CD8-positive, alpha-beta memory T cell (primary cell): ENCODE measurements at regions of chr7 and their contacts with region 1.

Region 1: GRCh38 chr7:155205368-155206317 is 92.0 kb upstream of the INSIG1 start:
- DNase-seq: peak; percentile 70 to 95 (median 81)
- H3K4me3 ChIP-seq: peak overlapping the region; percentile 70
- H3K4me3 Mint-ChIP-seq: peak overlapping the region; percentile 84 to 89 (median 87)
- H3K27ac ChIP-seq: peak overlapping the region; percentile 91
- H3K27ac Mint-ChIP-seq: peak overlapping the region; percentile 93 to 99 (median 96)
- H3K4me1 ChIP-seq: peaks cover 22% of the 10 kb centered on the region
- H3K4me1 Mint-ChIP-seq: peaks cover 16 to 22% (median 21%) of the 10 kb centered on the region in 3 donors
- H3K27me3 ChIP-seq: no peaks in the 10 kb centered on the region
- H3K27me3 Mint-ChIP-seq: no peaks in the 10 kb centered on the region

Region 2: GRCh38 chr7:155190688-155191087 is 15.0 kb before region 1 on chr7:
- CTCF ChIA-PET with region 1: interaction called, 22 read pairs
- POLR2A ChIA-PET with region 1: no interaction called
- DNase-seq: peak; percentile 31 to 58 (median 50)
- H3K4me3 ChIP-seq: no peak overlapping the region
- H3K4me3 Mint-ChIP-seq: peak overlapping the region in 1 of 7 donors; percentile 34
- H3K27ac ChIP-seq: no peak overlapping the region
- H3K27ac Mint-ChIP-seq: no peak overlapping the region
- H3K4me1 ChIP-seq: no peaks in the 10 kb centered on the region
- H3K4me1 Mint-ChIP-seq: peaks cover 4 to 6% (median 4%) of the 10 kb centered on the region in 3 donors
- H3K27me3 ChIP-seq: no peaks in the 10 kb centered on the region
- H3K27me3 Mint-ChIP-seq: peaks cover 9 to 19% of the 10 kb centered on the region in 2 donors

Region 3: DNA sequence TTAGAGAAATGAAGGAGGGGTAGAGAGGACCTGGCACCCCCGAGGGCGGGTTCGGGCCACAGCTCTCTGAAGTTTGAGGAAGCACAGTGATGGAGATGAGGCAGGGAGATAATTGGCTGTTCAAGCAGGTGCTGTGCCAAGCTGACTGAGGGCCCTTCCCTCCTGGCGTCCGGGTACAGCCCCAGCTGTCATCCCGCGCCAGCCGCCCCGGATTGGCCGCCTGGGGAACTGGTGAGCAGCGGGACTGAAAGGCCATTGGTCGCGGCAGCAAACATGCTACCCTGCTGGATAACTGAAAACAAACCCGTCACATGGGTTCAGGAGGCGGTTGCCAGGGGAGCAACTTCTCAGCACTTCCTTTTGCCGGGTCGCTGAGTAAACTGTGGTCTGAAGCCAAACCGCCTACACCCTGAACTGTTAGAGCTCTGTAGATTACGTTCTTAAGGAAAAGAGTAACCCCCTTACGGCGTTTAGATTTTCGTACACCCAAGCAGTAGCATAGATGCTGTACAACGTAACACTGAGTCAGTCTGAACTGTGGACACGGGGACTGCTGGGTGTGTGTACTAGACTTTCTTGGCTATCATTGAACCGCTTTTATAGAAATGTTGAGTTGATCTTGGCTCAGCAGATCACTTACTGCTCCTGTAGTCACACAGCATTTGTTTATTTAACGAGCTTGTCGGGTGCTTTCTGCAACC is 93.3 kb after region 1 on chr7:
- CTCF ChIA-PET with region 1: interaction called, 19 read pairs
- POLR2A ChIA-PET with region 1: interaction called, 67 read pairs
- DNase-seq: peak; percentile 92 to 98 (median 97)
- H3K4me3 ChIP-seq: peak overlapping the region; percentile 67
- H3K4me3 Mint-ChIP-seq: peak overlapping the region; percentile 88 to 97 (median 92)
- H3K27ac ChIP-seq: peak overlapping the region; percentile 92
- H3K27ac Mint-ChIP-seq: peak overlapping the region; percentile 96 to 100 (median 97)
- H3K4me1 ChIP-seq: peaks cover 38% of the 10 kb centered on the region
- H3K4me1 Mint-ChIP-seq: peaks cover 35 to 52% (median 39%) of the 10 kb centered on the region in 3 donors
- H3K27me3 ChIP-seq: no peaks in the 10 kb centered on the region
- H3K27me3 Mint-ChIP-seq: no peaks in the 10 kb centered on the region

Region 4: DNA sequence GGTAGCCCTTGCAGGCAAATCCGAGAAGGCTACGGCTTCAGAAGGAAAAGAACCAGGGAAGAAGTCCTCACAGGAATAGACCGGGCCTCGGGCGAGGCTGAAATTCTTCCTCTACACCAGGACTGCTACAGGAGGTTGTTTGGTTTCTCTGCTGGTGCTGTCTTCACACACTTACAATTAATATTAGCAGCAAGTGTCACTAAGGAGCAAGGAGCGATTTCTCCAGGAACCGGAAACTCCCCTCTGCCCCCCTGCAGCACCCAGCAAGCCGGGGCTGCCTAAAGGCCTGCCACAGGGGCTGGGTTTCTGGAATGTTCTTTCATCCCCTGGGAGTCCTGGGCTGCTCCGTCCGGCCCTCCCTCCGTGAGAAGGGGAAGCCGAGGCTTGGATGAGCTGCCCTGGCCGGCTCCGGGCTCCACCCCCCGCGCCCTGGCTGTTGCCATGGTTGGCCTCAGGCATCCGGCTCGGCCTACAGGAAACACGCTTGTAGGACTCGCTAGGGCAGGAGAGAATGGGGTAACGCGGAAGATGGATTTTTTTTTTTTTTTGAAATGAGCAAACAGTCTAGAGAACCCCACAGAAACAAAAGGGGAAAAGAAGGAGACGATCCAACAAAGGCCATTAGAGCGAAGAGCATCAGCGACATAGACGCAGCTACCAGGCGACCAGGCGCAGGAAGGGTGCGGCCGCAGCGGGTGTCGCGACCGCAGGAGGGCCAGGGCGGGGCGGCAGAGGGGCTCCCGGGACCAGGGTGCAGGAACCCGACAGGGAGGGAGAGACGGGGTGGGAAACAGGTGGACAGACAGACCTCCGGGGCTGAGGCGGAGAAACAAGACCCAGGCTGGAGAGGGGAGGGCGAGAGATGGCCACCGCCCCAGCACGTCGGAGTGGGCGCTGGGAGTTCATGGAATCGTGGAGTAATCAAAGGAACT is 285.3 kb after region 1 on chr7:
- CTCF ChIA-PET with region 1: no interaction called
- POLR2A ChIA-PET with region 1: no interaction called
- DNase-seq: peak in 3 of 5 donors; percentile 14 to 23 (median 17)
- H3K4me3 ChIP-seq: peak overlapping the region; percentile 45
- H3K4me3 Mint-ChIP-seq: peak overlapping the region; percentile 78 to 91 (median 86)
- H3K27ac ChIP-seq: no peak overlapping the region
- H3K27ac Mint-ChIP-seq: peak overlapping the region in 6 of 8 donors; percentile 41 to 93 (median 72)
- H3K4me1 ChIP-seq: peaks cover 5% of the 10 kb centered on the region
- H3K4me1 Mint-ChIP-seq: peaks cover 11 to 18% (median 18%) of the 10 kb centered on the region in 3 donors
- H3K27me3 ChIP-seq: peaks cover 8% of the 10 kb centered on the region
- H3K27me3 Mint-ChIP-seq: peaks cover 10 to 35% of the 10 kb centered on the region in 2 donors